Activated T-helper 2 cell treated with anti-CD3 and anti-CD28 coated beads, Interferon-gamma antibody, Interleukin-2, Interleukin-4, amounts not matched to agents 10 μg/mL and 5 μg/mL and 100 μg/mL, durations not matched to agents 14 hours and 24 hours and 36 hours (primary cell): ENCODE measurements at regions of chr5 and their contacts with region 1.

Region 1: DNA sequence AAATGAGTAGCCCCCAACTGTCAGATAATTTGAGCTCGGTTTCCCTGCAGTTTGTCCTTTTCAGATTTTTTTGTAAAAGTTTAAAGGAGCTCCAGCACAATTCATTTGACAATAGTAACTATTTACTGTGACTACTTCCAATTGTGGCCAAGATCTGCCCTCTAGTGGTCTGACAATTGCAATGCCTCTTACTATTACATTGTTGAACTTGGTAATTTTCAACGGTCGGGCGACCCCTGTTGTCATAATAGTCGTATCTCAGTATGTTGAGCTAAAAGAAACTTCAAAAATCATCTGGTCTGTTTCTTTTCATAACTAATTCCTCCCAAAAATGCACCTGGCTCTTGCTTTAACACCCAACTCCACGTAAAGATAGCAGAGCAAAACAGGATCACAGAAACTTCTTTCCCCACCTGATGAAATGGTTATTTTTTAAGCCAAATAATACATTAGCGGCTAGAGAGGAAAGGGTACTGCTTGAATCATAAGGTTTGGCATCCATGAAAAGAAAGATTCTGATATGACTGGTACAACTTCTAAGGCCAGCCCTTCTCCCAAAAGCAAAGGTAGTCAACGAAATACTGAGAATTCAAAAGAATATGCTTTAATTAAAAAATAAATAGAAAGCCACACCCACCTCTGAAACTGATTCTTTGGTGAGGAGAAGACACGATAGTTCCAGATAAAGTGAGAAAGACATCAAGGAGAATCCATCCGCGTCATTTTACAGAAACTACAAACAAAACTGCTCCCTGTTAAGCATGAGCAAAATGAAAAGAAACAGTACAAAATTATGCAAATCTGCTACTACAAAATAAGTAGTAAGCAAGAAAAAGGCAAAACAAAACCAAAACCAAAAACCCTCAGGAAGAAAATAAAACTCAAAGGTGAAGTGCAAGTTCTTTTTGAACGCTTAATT is 76.9 kb upstream of the HTR4 start:
- DNase-seq: peak; percentile 49
- H3K4me3 Mint-ChIP-seq: no peak overlapping the region
- H3K27ac Mint-ChIP-seq: no peak overlapping the region
- H3K4me1 Mint-ChIP-seq: peaks cover 10% of the 10 kb centered on the region
- H3K27me3 Mint-ChIP-seq: peaks cover 21% of the 10 kb centered on the region

Region 2: DNA sequence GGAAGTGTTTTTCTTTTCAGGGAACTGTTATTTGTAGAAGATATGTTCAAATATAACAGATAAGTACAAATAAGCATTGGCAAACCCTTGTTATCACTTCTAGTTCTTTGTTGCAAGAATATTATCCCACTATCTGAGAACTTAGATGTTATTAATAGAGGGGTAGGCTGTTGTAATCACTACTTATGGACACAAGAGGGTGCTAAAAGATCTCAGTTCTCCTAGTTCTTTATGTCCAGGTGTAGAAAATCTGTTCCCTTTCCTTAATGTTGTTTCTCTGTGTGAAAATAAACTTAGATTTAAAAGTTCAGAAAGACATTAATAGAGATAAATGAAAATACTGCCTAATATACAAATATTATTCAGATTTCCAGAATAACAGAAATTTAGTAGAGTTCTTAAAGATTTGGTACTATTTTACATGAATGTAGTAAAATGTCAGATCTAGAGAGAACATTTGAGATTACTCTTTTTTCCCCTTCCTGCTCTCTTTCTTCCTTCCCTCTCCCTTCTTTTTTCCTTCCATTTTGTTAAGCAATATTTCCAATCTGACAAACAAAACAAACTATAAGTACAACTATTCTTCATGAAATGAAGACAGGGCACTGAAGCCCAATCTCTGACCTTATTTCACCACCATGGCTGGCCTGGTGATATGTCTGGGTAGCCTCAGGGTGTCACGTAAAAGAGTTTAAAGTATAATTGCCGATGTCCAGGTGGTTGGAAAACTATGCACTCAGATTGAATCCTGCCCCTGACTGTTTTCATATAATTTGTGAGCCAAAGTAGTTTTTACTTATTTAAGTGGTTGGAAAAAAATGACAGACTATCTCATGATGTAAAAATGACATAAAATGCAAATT is 781.3 kb before region 1 on chr5:
- intact Hi-C with region 1: loop called (anchors 2 kb)
- DNase-seq: no peak
- H3K4me3 Mint-ChIP-seq: no peak overlapping the region
- H3K27ac Mint-ChIP-seq: no peak overlapping the region
- H3K4me1 Mint-ChIP-seq: no peaks in the 10 kb centered on the region
- H3K27me3 Mint-ChIP-seq: no peaks in the 10 kb centered on the region

Region 3: DNA sequence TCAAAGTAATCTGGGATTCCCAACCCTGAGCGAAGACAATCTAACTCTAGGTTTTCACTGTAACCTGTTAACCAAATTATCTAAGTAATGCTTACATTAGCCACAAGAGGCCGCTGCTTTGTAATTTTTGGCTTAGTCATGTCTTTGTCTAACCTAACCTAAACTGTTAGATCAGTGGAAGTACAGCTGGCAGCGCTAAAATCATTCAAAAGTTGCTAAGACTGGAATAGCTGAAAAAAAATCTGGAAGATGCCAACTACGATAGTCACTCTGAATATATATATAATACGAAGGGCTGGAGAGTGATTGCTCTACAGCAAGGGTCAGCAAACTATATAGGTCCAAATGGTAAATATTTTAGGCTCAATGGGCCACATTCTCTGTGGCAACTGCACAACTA is 287.2 kb before region 1 on chr5:
- intact Hi-C with region 1: loop called (anchors 1 kb)
- DNase-seq: peak; percentile 15
- H3K4me3 Mint-ChIP-seq: no peak overlapping the region
- H3K27ac Mint-ChIP-seq: no peak overlapping the region
- H3K4me1 Mint-ChIP-seq: peaks cover 2% of the 10 kb centered on the region
- H3K27me3 Mint-ChIP-seq: no peaks in the 10 kb centered on the region

Region 4: GRCh38 chr5:148998174-148998797 is 267.1 kb after region 1 on chr5:
- intact Hi-C with region 1: loop called (anchors 1 kb)
- DNase-seq: no peak
- H3K4me3 Mint-ChIP-seq: no peak overlapping the region
- H3K27ac Mint-ChIP-seq: no peak overlapping the region
- H3K4me1 Mint-ChIP-seq: no peaks in the 10 kb centered on the region
- H3K27me3 Mint-ChIP-seq: peaks cover 20% of the 10 kb centered on the region

Region 5: GRCh38 chr5:149114403-149115312 is 383.5 kb after region 1 on chr5:
- intact Hi-C with region 1: loop called (anchors 1 kb)
- DNase-seq: no peak
- H3K4me3 Mint-ChIP-seq: no peak overlapping the region
- H3K27ac Mint-ChIP-seq: no peak overlapping the region
- H3K4me1 Mint-ChIP-seq: peaks cover 10% of the 10 kb centered on the region
- H3K27me3 Mint-ChIP-seq: peaks cover 22% of the 10 kb centered on the region